ENCODE measurements at regions of chr19 and their contacts with region 1.

Region 1: DNA sequence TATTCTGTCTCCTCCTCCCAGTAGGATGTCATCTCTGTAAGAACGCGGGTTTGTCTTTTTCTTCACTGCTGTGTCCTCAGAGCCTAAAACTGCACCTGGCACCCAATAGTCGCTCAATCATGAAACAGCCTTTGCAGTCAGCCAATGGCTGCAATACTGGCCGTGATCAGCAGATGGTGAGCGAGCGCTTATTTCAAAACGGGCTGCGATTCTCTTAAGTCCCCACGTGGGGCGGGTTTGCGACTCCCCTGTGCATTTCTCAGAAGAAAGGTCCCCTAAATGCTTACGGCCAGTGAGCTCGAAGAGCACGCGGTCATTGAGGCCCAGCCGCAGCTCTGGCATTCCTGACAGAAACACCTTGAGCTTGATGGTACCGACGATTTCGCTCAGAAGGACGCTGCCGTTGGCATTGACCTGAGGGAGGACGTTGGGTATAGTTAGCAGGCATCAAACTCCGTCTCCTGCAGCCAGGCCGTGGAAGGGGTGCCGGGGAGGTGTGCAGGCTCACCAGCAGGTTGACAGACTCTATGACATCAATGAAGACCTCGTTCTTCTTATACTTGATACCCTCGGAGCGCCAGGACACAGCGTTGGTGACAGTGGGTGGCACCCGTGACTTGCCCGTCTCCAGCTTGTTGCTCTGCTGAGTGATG is 6.0 kb downstream of the AP1M2 start:
- DNase-seq: peak; percentile 87
- ATAC-seq: peak; percentile 82
- H3K4me3 ChIP-seq: no peak overlapping the region
- H3K27ac ChIP-seq: no peak overlapping the region; the same call in 1 of the 2 replicates
- H3K4me1 ChIP-seq: peaks cover 8 to 20% of the 10 kb centered on the region in 2 experiments; a peak in 3 of 4 replicates
- H3K27me3 ChIP-seq: no peaks in the 10 kb centered on the region
- CTCF ChIP-seq: peak; percentile 98 to 99 (median 99)
- POLR2A ChIP-seq: no peak
- RAD21 ChIP-seq: peak; percentile 97

Region 2: DNA sequence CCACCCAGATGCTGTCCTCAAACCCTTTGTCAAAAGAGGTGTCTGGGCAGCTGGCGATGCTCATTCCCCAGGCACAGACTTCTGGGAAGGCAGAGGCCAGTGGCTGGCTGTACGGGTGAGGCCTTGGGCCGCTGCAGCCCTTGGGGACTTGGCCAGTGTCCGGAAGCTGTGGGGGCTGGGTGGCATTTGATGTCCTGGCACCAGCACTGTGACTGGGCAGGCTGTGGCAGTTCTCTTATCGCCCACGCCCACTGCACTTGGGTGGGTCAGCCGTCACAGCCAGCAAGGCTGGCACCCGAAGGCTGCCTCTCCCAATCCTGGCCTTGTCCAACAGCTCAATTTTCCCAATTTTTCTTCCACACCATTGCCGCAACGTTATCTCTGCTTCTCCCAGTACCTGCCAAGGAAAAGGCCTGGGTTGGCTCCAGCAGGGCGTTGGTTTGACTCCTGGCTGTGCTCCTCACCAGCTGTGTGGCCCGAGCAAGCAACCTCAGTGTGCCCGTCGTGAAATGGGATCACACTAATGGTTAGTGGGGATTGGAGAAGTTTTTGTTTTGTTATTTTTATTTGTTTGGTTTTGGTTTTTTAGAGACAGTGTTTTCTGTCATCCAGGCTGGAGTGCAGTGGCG is 31.5 kb after region 1 on chr19:
- CTCF ChIA-PET with region 1: no interaction called
- POLR2A ChIA-PET with region 1: no interaction called
- RAD21 ChIA-PET with region 1: no interaction called
- intact Hi-C with region 1: no loop called
- DNase-seq: no peak
- ATAC-seq: no peak
- H3K4me3 ChIP-seq: no peak overlapping the region
- H3K27ac ChIP-seq: no peak overlapping the region
- H3K4me1 ChIP-seq: peaks cover 16 to 28% of the 10 kb centered on the region in 2 experiments
- H3K27me3 ChIP-seq: no peaks in the 10 kb centered on the region
- CTCF ChIP-seq: no peak
- POLR2A ChIP-seq: no peak
- RAD21 ChIP-seq: no peak

Region 3: GRCh38 chr19:10625003-10625776 is 44.1 kb after region 1 on chr19 and contains the start of gene SLC44A2:
- CTCF ChIA-PET with region 1: no interaction called
- POLR2A ChIA-PET with region 1: no interaction called
- RAD21 ChIA-PET with region 1: no interaction called
- intact Hi-C with region 1: loop called (anchors 5 kb)
- DNase-seq: peak; percentile 38
- ATAC-seq: peak; percentile 94
- H3K4me3 ChIP-seq: peak within 1 kb of the TSS; percentile 85 to 92
- H3K27ac ChIP-seq: peak within 1 kb of the TSS; percentile 89
- H3K4me1 ChIP-seq: peaks cover 46 to 62% of the 10 kb centered on the region in 2 experiments
- H3K27me3 ChIP-seq: no peaks in the 10 kb centered on the region
- CTCF ChIP-seq: no peak
- POLR2A ChIP-seq: no peak
- RAD21 ChIP-seq: peak; percentile 34; the same call in 1 of the 2 replicates
- total RNA-seq, gene SLC44A2: 90.9 TPM

Region 4: DNA sequence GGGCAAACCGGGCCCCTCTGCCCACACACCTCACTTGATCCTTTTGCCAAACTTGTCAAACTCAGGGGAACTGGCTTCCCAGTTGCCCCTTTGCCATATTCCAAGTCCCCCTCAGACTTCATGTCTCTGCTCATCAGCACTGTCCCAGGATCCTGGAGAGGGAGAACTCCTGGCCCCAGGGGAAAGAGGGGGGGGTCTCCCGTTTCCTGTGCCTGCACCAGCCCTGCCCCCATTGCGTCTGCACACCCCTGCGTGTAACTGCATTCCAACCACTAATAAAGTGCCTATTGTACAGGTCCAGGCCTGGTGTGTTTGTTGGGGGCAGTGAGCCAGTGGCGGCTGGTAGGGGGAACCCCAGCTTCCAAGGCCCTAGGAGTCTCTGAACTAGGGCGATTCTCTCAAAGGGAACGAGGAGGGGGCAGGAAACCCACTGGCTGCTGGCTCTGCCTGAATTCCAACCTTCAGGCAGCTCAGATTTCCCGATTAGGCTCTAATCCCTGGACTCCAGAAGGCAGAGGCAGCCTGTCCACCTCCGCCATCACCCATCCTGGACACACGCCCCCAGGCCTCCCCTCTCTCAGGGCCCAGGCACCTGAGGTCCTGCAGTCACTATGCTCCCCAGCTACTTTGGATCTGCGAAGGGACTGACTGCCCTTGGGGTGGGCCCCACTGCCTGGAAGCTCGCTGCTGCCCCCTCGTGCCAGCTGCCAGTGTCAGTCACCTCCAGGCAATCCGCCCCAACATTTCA is 63.3 kb after region 1 on chr19:
- CTCF ChIA-PET with region 1: interaction called, 114 read pairs
- POLR2A ChIA-PET with region 1: interaction called, 5 read pairs
- RAD21 ChIA-PET with region 1: interaction called, 26 to 31 read pairs
- intact Hi-C with region 1: loop called (anchors 1 kb)
- DNase-seq: peak; percentile 35
- ATAC-seq: peak; percentile 95
- H3K4me3 ChIP-seq: no peak overlapping the region
- H3K27ac ChIP-seq: peak overlapping the region; percentile 25; the same call in 1 of the 2 replicates
- H3K4me1 ChIP-seq: peaks cover 5 to 13% of the 10 kb centered on the region in 2 experiments; a peak in 3 of 4 replicates
- H3K27me3 ChIP-seq: no peaks in the 10 kb centered on the region
- CTCF ChIP-seq: peak; percentile 83 to 97 (median 85)
- POLR2A ChIP-seq: no peak
- RAD21 ChIP-seq: peak; percentile 96